CD4-positive, alpha-beta memory T cell (primary cell): ENCODE measurements at regions of chr3 and their contacts with region 1.

Region 1: DNA sequence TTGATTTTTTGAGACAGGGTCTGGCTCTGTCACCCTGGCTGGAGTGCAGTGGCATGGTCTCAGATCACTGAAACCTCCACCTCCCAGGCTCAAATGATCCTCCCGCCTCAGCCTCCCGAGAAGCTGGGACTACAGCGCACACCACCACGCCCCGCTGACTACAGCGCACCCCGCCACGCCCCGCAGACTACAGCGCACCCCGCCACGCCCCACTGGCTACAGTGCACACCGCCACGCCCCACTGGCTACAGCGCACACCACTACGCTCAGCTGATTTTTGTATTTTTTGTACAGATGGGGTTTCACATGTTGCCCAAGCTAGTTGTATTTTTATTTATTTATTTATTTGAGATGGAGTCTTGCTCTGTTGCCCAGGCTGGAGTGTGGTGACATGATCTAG is 35.6 kb downstream of the SLC51A start:
- DNase-seq: no peak
- H3K4me3 ChIP-seq: no peak overlapping the region
- H3K4me3 Mint-ChIP-seq: peak overlapping the region in 1 of 8 donors; percentile 12
- H3K27ac ChIP-seq: no peak overlapping the region
- H3K27ac Mint-ChIP-seq: peak overlapping the region in 3 of 7 donors; percentile 61 to 85 (median 83)
- H3K4me1 ChIP-seq: no peaks in the 10 kb centered on the region
- H3K4me1 Mint-ChIP-seq: peaks cover 7 to 23% (median 12%) of the 10 kb centered on the region in 4 donors
- H3K27me3 ChIP-seq: no peaks in the 10 kb centered on the region
- H3K27me3 Mint-ChIP-seq: no peaks in the 10 kb centered on the region

Region 2: GRCh38 chr3:196263819-196264218 is 11.9 kb after region 1 on chr3:
- CTCF ChIA-PET with region 1: interaction called, 11 read pairs
- POLR2A ChIA-PET with region 1: no interaction called
- intact Hi-C with region 1: no loop called
- DNase-seq: no peak
- H3K4me3 ChIP-seq: no peak overlapping the region
- H3K4me3 Mint-ChIP-seq: no peak overlapping the region
- H3K27ac ChIP-seq: no peak overlapping the region
- H3K27ac Mint-ChIP-seq: peak overlapping the region in 3 of 7 donors; percentile 8 to 69 (median 57)
- H3K4me1 ChIP-seq: no peaks in the 10 kb centered on the region
- H3K4me1 Mint-ChIP-seq: peaks cover 5 to 17% (median 12%) of the 10 kb centered on the region in 4 donors
- H3K27me3 ChIP-seq: no peaks in the 10 kb centered on the region
- H3K27me3 Mint-ChIP-seq: no peaks in the 10 kb centered on the region

Region 3: GRCh38 chr3:196287440-196288148 is 35.7 kb after region 1 on chr3 and contains the start of gene PCYT1A:
- CTCF ChIA-PET with region 1: no interaction called
- POLR2A ChIA-PET with region 1: no interaction called
- intact Hi-C with region 1: loop called (anchors 1 kb)
- DNase-seq: peak; percentile 66 to 80 (median 73)
- H3K4me3 ChIP-seq: peak within 1 kb of the TSS; percentile 87 to 89
- H3K4me3 Mint-ChIP-seq: peak within 1 kb of the TSS; percentile 95 to 100 (median 99)
- H3K27ac ChIP-seq: peak within 1 kb of the TSS; percentile 92
- H3K27ac Mint-ChIP-seq: peak within 1 kb of the TSS; percentile 91 to 100 (median 98)
- H3K4me1 ChIP-seq: peaks cover 45% of the 10 kb centered on the region
- H3K4me1 Mint-ChIP-seq: peaks cover 29 to 52% (median 46%) of the 10 kb centered on the region in 4 donors
- H3K27me3 ChIP-seq: no peaks in the 10 kb centered on the region
- H3K27me3 Mint-ChIP-seq: no peaks in the 10 kb centered on the region
- total RNA-seq, gene PCYT1A: 70.1 to 73.7 TPM

Region 4: DNA sequence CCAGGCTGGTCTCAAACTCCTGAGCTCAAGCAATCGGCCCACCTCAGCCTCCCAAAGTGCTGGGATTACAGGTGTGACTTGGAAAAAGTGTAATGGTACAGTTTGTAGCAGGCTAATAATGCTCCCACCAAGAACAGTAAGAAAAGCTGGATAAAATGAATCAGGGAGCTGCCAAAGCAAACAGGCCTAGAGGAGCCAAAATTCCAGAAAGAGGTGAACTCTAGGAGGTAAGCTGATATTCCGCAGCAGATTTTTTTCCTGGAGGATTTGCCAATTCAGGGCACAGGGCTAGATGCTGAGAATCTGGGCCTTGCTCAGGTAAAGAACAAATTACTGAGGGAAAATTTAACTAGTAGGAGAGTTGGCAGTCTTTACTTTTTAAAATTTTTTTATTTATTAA is 46.6 kb after region 1 on chr3:
- CTCF ChIA-PET with region 1: no interaction called
- POLR2A ChIA-PET with region 1: no interaction called
- intact Hi-C with region 1: no loop called
- DNase-seq: no peak
- H3K4me3 ChIP-seq: no peak overlapping the region
- H3K4me3 Mint-ChIP-seq: no peak overlapping the region
- H3K27ac ChIP-seq: no peak overlapping the region
- H3K27ac Mint-ChIP-seq: no peak overlapping the region
- H3K4me1 ChIP-seq: no peaks in the 10 kb centered on the region
- H3K4me1 Mint-ChIP-seq: peaks cover 0 to 2% (median 0%) of the 10 kb centered on the region in 4 donors
- H3K27me3 ChIP-seq: no peaks in the 10 kb centered on the region
- H3K27me3 Mint-ChIP-seq: no peaks in the 10 kb centered on the region

Region 5: GRCh38 chr3:196365736-196366135 is 113.8 kb after region 1 on chr3:
- CTCF ChIA-PET with region 1: no interaction called
- POLR2A ChIA-PET with region 1: no interaction called
- intact Hi-C with region 1: loop called (anchors 5 kb)
- DNase-seq: no peak
- H3K4me3 ChIP-seq: no peak overlapping the region
- H3K4me3 Mint-ChIP-seq: no peak overlapping the region
- H3K27ac ChIP-seq: no peak overlapping the region
- H3K27ac Mint-ChIP-seq: peak overlapping the region in 2 of 7 donors; percentile 3 to 78
- H3K4me1 ChIP-seq: no peaks in the 10 kb centered on the region
- H3K4me1 Mint-ChIP-seq: peaks cover 3 to 6% (median 4%) of the 10 kb centered on the region in 4 donors
- H3K27me3 ChIP-seq: no peaks in the 10 kb centered on the region
- H3K27me3 Mint-ChIP-seq: no peaks in the 10 kb centered on the region

Region 6: GRCh38 chr3:196518966-196519717 is 267.2 kb after region 1 on chr3:
- CTCF ChIA-PET with region 1: interaction called, 113 read pairs
- POLR2A ChIA-PET with region 1: interaction called, 4 read pairs
- intact Hi-C with region 1: loop called (anchors 1 kb)
- DNase-seq: peak; percentile 39 to 62 (median 48)
- H3K4me3 ChIP-seq: no peak overlapping the region
- H3K4me3 Mint-ChIP-seq: no peak overlapping the region
- H3K27ac ChIP-seq: no peak overlapping the region
- H3K27ac Mint-ChIP-seq: peak overlapping the region in 2 of 7 donors; percentile 65 to 74
- H3K4me1 ChIP-seq: no peaks in the 10 kb centered on the region
- H3K4me1 Mint-ChIP-seq: no peaks in the 10 kb centered on the region
- H3K27me3 ChIP-seq: no peaks in the 10 kb centered on the region
- H3K27me3 Mint-ChIP-seq: peaks cover 0 to 2% of the 10 kb centered on the region in 2 donors